ENCODE measurements at regions of chr17 and their contacts with region 1.

Region 1: DNA sequence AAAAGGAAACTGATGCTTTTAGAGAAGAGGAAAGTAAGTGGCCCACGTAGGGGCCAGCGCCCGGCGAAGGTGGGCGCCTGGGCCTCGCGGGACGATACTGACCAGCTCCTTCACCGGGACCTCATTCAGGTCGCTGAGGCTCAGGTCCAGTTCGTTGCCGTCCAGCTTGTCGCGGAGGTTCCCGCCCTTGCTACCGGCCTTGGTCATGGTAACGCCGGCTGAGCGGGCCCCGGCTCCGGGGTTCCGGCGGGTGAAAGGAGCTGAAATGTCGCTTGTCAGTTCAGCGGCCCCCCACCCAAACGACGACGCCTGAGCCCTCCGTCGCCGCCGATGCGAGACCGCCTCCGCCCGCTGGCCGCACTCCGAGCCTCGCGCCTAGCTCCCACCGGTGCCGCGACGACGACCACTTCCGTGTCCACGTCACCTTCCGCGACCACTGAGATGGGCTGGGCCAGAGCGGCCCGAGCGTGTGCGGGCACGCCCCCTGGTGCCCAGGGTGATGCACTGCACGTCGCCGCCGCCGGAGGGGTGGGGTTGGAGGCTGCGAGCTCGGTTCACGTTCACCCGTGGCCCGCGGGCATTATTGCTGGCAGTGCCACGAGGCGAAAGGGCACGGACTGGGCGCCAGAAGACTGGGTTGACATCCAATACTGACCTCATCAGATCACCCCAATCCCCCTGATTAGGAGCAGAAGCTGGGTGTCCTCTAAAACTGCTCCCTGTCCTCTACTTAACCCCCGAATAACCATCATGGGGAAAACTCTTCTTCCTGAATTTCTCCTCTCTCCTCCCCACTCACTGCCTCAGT is at the start of gene LRRC59:
- DNase-seq: peak; percentile 23 to 98
- H3K4me3 ChIP-seq: peak within 1 kb of the TSS; percentile 64 to 92 (median 80)
- H3K27ac ChIP-seq: no peak within 1 kb of the TSS; the same call in 1 of the 2 replicates
- H3K4me1 ChIP-seq: no peaks in the 10 kb centered on the region; a peak in 3 of 7 replicates
- H3K27me3 ChIP-seq: no peaks in the 10 kb centered on the region
- CTCF ChIP-seq: peak; percentile 97 to 100 (median 98)
- EP300 ChIP-seq: 0 out of 3 replicates have a peak, but pooled peaks of 1 of the 2 experiments have one; percentile 13
- POLR2A ChIP-seq: peak; percentile 44 to 89
- RAD21 ChIP-seq: peak; percentile 19 to 52; a peak in 3 of 4 replicates
- total RNA-seq, gene LRRC59: 117 TPM in 2 replicates

Region 2: GRCh38 chr17:50139950-50140871 is 257.1 kb before region 1 on chr17:
- CTCF ChIA-PET with region 1: no interaction called
- POLR2A ChIA-PET with region 1: no interaction called
- DNase-seq: peak; percentile 72 to 96
- H3K4me3 ChIP-seq: no peak overlapping the region
- H3K27ac ChIP-seq: no peak overlapping the region; the same call in 1 of the 2 replicates
- H3K4me1 ChIP-seq: peaks cover 0 to 7% (median 0%) of the 10 kb centered on the region in 4 experiments; a peak in 1 of 7 replicates
- H3K27me3 ChIP-seq: no peaks in the 10 kb centered on the region
- CTCF ChIP-seq: peak; percentile 87 to 98 (median 95)
- EP300 ChIP-seq: peak in 1 of 2 experiments; percentile 18; a peak in 1 of 3 replicates
- POLR2A ChIP-seq: no peak
- RAD21 ChIP-seq: peak; percentile 68 to 71

Region 3: DNA sequence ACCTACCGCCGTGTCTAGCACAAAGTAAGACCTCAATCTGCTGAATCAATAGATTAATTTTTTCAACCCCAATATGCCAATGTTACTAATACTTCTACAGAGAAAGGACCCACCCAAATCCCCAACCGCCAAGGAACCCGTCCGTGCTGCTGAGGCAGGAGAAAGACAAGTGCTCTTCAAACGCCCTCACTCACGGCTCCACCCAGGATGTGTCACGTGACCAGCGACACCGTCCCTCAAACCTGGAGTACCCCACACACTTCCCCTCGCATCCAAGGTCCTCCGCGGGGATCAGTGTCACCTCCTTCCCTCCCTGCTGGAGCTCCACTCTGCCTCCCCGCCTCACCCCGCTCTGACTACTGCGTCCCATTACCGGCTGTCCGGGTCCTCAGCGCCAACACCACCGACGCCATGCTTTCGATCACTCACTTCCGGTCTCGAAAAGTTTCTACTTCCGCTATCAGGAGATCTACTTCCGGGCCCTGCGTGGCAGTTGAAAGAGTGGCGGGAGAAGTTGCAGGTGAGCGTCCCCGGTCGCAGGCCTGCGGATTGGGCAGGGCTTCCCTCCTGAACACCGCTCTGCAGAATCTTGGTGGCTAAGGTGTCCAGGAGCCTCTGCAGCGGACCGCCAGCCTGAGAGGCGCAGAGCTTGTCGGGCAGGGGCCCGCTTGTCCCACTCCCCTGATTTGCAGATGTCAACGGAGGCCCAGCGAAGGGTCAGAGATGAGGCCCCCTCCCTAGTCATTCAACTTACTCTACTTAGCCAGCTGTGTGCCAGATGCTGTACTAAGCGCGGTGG is 24.4 kb before region 1 on chr17 and contains the starts of genes EME1 and MRPL27:
- CTCF ChIA-PET with region 1: interaction called, 20 read pairs
- POLR2A ChIA-PET with region 1: interaction called, 313 read pairs
- DNase-seq: peak; percentile 36 to 86
- H3K4me3 ChIP-seq: peak within 1 kb of the TSS; percentile 86 to 97 (median 92)
- H3K27ac ChIP-seq: peak within 1 kb of the TSS; percentile 97
- H3K4me1 ChIP-seq: peaks cover 0 to 9% (median under 1%) of the 10 kb centered on the region in 4 experiments; a peak in 2 of 7 replicates
- H3K27me3 ChIP-seq: no peaks in the 10 kb centered on the region
- CTCF ChIP-seq: no peak
- EP300 ChIP-seq: 0 out of 3 replicates have a peak, but pooled peaks of 1 of the 2 experiments have one; percentile 9
- POLR2A ChIP-seq: peak; percentile 63 to 92
- RAD21 ChIP-seq: no peak
- total RNA-seq, gene EME1: 13.3 and 13.9 TPM in 2 replicates
- total RNA-seq, gene MRPL27: 75.6 and 82.6 TPM in 2 replicates

Region 4: DNA sequence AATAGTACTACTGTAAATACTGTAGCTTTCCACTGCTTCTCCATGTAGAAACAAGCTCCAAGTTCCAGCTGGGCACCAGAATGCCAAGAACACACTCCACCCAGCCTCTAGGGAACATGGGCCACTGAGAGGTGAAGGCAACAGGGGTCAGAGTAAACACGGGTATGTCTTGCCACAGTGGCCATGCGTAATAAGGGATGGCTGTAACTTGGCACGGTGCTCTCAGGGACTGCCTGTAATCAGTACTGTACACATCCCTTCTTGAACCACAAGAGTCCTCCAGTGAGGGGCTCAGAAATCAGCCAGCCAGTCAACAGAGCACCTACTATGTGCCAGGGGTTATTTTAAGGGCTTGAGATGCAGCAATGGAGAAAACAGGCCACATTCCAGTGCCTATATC is 10.8 kb before region 1 on chr17:
- CTCF ChIA-PET with region 1: interaction called, 30 read pairs
- POLR2A ChIA-PET with region 1: interaction called, 23 read pairs
- DNase-seq: no peak
- H3K4me3 ChIP-seq: no peak overlapping the region
- H3K27ac ChIP-seq: no peak overlapping the region
- H3K4me1 ChIP-seq: no peaks in the 10 kb centered on the region
- H3K27me3 ChIP-seq: no peaks in the 10 kb centered on the region
- CTCF ChIP-seq: no peak
- EP300 ChIP-seq: no peak
- POLR2A ChIP-seq: no peak
- RAD21 ChIP-seq: no peak

Region 5: GRCh38 chr17:50443368-50443971 is 46.2 kb after region 1 on chr17:
- CTCF ChIA-PET with region 1: interaction called, 17 read pairs
- POLR2A ChIA-PET with region 1: no interaction called
- DNase-seq: no peak
- H3K4me3 ChIP-seq: no peak overlapping the region
- H3K27ac ChIP-seq: no peak overlapping the region
- H3K4me1 ChIP-seq: peaks cover 0 to 6% (median 0%) of the 10 kb centered on the region in 4 experiments; a peak in 2 of 7 replicates
- H3K27me3 ChIP-seq: no peaks in the 10 kb centered on the region; a peak in 1 of 7 replicates
- CTCF ChIP-seq: no peak
- EP300 ChIP-seq: no peak
- POLR2A ChIP-seq: no peak
- RAD21 ChIP-seq: no peak

Region 6: DNA sequence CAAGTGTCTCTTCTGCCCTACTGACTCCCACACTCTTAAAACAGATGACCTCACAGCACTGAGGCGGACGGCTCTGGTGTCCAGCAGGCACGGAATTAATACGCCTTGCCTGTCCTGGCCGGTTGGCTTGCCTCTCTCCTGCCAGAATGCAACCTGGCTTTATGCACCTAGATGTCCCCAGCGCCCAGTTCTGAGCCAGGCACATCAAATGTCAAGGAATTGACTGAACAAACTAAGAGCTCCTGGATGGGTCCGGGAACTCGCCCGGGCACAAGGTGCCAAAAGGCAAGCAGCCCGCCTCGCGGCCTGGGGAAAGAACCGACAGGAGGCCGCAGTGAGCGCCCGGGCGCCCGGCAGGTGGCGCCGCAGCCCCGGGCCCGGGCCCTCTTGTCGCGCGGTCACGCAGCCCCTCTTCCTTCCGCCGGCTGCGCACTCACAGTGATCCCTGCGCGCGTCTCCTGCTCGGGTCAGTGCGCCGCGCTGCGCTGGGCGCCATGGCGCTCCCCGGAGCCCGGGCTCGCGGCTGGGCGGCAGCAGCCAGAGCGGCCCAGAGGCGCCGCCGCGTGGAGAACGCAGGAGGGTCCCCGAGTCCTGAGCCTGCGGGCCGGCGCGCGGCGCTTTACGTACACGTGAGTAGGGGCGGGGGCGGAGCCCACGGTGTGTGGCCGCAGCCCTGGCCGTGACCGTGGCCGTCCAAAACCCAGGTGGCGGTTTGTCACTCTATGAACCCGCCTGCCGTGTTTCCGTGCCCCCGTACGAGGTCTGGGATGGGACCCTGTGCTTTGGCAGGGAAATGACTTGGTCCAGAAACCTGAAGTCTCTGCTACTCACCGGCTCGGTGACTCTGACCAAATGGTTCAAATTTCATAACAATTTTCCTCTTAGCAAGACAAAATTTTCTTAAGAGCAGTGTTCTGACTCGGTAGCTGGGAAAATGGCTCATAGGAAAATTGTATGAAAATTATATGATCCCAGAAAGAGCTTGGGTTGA is 81.4 kb after region 1 on chr17 and contains the start of gene RSAD1:
- CTCF ChIA-PET with region 1: interaction called, 49 read pairs
- POLR2A ChIA-PET with region 1: interaction called, 7 read pairs
- DNase-seq: peak; percentile 68 to 84
- H3K4me3 ChIP-seq: peak within 1 kb of the TSS; percentile 46 to 81 (median 72)
- H3K27ac ChIP-seq: no peak within 1 kb of the TSS; the same call in 1 of the 2 replicates
- H3K4me1 ChIP-seq: peaks cover 0 to 10% (median 6%) of the 10 kb centered on the region in 4 experiments; a peak in 6 of 7 replicates
- H3K27me3 ChIP-seq: peaks cover 0 to 4% (median under 1%) of the 10 kb centered on the region in 4 experiments; a peak in 2 of 7 replicates
- CTCF ChIP-seq: peak; percentile 66 to 91 (median 67)
- EP300 ChIP-seq: no peak; a peak in 1 of 3 replicates
- POLR2A ChIP-seq: peak in 1 of 2 experiments; percentile 87; a peak in 2 of 3 replicates
- RAD21 ChIP-seq: peak; percentile 40 to 58; a peak in 3 of 4 replicates
- total RNA-seq, gene RSAD1: 31.3 and 33.5 TPM in 2 replicates